ENCODE measurements at regions of chr2 and their contacts with region 1.

Region 1: DNA sequence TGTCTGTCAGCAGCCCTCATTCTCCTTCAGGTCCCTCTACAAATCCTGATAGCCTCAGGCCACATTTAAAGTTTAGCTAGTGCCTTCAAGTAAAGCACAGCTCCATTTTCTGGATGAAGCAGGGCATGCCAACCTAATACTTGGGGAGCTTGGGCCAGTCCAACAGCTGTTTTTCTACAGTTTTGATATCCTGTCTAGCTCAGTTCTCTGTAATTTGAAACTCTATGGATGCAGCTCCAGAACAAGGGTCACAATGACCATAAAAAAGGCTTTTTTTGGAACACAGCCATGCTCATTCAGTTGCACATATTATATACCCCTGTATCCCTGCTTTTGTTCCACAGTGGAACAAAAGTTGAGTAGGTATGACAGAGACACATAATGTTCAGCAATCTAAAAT is 373.5 kb downstream of the SUCLG1 start:
- DNase-seq: no peak
- H3K4me3 ChIP-seq: no peak overlapping the region
- H3K27ac ChIP-seq: no peak overlapping the region
- H3K4me1 ChIP-seq: no peaks in the 10 kb centered on the region
- H3K27me3 ChIP-seq: peaks cover 3% of the 10 kb centered on the region
- CTCF ChIP-seq: no peak

Region 2: DNA sequence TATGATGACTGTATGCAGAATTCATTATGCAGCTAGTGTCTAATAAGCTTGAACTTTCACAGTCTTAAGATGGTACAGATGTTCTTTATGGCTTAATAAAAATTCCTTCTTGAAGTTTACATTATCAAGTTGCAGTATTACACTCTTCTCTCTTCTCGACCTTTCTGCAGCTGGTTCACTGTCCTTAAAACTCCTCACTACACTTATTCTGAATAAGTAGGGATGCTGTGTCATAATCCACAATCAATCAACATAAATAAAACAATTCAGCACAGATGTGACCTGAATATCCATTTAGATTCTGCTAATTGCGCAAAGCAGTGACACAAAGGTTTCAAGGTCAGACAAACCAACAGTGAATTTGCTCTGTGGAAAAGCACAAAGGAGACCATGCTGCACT is 16.7 kb after region 1 on chr2:
- CTCF ChIA-PET with region 1: no interaction called
- POLR2A ChIA-PET with region 1: interaction called, 12 read pairs
- intact Hi-C with region 1: no loop called
- DNase-seq: no peak
- H3K4me3 ChIP-seq: no peak overlapping the region
- H3K27ac ChIP-seq: no peak overlapping the region
- H3K4me1 ChIP-seq: no peaks in the 10 kb centered on the region
- H3K27me3 ChIP-seq: no peaks in the 10 kb centered on the region
- CTCF ChIP-seq: no peak